ENCODE measurements at regions of chr1 and their contacts with region 1.

Region 1: GRCh38 chr1:107750358-107750959 is 214.5 kb downstream of the VAV3 start:
- DNase-seq: peak; percentile 74
- ATAC-seq: no peak
- H3K4me3 Mint-ChIP-seq: no peak overlapping the region
- H3K27ac Mint-ChIP-seq: no peak overlapping the region
- H3K4me1 Mint-ChIP-seq: no peaks in the 10 kb centered on the region
- H3K27me3 Mint-ChIP-seq: no peaks in the 10 kb centered on the region
- CTCF ChIP-seq: peak; percentile 72

Region 2: DNA sequence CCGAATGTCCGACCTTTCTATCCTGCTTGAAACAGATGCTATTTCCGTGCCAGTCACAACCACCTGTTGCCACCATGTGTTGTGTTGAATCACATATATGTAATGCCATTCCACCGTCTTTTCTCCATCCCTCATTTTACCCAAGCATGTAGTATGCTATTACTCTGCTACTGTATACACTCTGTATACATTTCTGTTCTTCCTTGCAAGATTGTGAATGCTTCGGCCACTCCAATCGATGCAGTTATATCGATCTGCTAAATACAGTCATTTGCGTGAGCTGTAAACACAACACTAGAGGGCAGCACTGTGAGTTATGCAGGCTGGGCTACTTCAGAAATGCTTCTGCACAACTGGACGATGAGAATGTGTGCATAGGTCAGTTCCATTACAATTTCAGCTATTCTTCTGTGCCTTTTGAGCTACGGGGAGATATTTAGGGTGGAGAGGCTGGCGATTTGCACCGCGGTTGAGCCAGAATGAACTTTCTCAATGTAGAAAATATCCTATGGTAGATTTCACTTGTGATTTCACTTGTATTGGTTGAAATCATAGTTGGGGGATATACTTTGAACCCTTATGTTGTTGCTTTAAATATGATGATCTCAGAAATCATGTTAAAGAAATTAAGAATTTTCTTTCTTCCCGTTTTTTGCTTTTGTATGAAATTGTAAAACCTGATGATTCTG is 319.8 kb before region 1 on chr1:
- CTCF ChIA-PET with region 1: interaction called, 12 read pairs
- POLR2A ChIA-PET with region 1: no interaction called
- intact Hi-C with region 1: no loop called
- DNase-seq: peak; percentile 49
- ATAC-seq: peak; percentile 49
- H3K4me3 Mint-ChIP-seq: no peak overlapping the region
- H3K27ac Mint-ChIP-seq: no peak overlapping the region
- H3K4me1 Mint-ChIP-seq: no peaks in the 10 kb centered on the region
- H3K27me3 Mint-ChIP-seq: peaks cover 1% of the 10 kb centered on the region
- CTCF ChIP-seq: peak; percentile 73

Region 3: DNA sequence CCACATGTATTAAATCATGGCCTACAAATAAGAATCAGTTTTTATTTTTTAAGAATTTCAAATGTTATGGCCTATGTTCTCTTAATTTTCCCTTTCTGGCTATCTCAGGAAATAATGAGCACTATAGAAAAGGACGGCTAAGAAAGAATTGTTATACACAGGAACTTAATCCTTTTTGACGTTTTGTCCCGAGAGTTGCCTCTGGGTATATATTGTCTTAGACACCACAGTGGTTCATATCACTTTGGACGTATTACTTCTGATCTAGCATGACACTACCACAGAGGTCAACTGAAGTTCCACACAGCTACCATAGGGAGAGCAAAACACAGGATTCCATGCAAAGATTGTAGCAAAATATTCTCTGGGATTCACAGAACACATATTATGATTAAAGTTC is 93.1 kb before region 1 on chr1:
- CTCF ChIA-PET with region 1: no interaction called
- POLR2A ChIA-PET with region 1: no interaction called
- intact Hi-C with region 1: no loop called
- DNase-seq: no peak
- ATAC-seq: no peak
- H3K4me3 Mint-ChIP-seq: no peak overlapping the region
- H3K27ac Mint-ChIP-seq: no peak overlapping the region
- H3K4me1 Mint-ChIP-seq: no peaks in the 10 kb centered on the region
- H3K27me3 Mint-ChIP-seq: no peaks in the 10 kb centered on the region
- CTCF ChIP-seq: no peak

Region 4: DNA sequence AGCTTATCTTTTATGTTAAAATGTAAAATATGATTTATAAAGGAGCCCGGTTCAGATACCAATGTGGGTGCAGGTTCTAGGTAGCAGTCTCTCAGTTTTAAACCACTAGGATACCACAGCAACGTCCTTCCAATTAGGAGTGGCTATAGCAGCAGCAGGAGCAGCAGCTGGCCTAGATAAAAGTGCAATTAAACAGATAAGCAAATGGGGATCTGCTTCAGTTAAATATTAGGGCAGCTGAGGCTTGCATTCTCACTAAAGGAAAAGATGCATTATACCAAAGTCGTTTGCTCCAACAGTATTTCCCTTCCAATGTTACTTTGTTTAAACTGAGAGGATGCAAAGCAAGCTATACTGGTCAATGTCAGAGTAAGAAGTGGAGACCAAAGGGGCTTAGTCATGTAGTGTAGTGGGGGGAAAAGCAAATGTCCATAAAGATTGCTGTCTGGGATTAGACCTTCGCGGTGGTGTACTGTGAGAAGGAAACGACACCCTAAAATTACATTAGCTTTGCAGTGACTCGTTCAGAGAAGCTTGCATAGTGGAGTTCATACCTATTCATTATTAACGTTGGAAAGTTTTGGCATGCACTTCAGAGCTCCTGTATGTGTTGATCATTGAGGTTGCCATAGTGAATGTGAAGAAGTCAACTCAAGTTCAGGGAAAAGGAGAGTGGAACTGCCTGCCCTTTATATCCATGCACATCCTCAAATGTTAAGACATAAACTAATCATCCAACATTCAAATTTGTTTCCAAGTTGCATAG is 57.7 kb before region 1 on chr1:
- CTCF ChIA-PET with region 1: no interaction called
- POLR2A ChIA-PET with region 1: no interaction called
- intact Hi-C with region 1: loop called (anchors 10 kb)
- DNase-seq: no peak
- ATAC-seq: no peak
- H3K4me3 Mint-ChIP-seq: no peak overlapping the region
- H3K27ac Mint-ChIP-seq: no peak overlapping the region
- H3K4me1 Mint-ChIP-seq: peaks cover 4% of the 10 kb centered on the region
- H3K27me3 Mint-ChIP-seq: no peaks in the 10 kb centered on the region
- CTCF ChIP-seq: no peak

Region 5: DNA sequence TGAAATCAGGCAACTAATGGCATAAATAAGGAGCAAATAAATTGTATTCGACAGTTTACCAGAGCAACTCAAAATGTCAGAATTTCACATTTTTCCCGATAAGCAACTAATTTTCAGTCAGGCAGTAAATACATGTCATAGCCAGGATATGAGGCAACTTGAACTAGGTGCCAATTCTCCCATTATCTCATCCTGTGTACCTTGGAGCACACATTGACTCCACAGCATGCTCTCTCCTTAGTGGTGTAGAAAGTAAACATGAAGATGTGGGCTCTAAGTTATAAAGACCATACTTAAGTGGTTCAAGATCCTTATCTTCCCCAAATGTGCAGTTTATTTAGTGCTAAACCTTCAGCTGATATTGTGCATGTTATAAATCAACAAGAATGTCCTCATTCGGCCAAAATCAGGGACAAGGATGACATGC is 16.7 kb after region 1 on chr1:
- CTCF ChIA-PET with region 1: interaction called, 10 read pairs
- POLR2A ChIA-PET with region 1: no interaction called
- intact Hi-C with region 1: no loop called
- DNase-seq: no peak
- ATAC-seq: no peak
- H3K4me3 Mint-ChIP-seq: no peak overlapping the region
- H3K27ac Mint-ChIP-seq: no peak overlapping the region
- H3K4me1 Mint-ChIP-seq: no peaks in the 10 kb centered on the region
- H3K27me3 Mint-ChIP-seq: no peaks in the 10 kb centered on the region
- CTCF ChIP-seq: no peak

Region 6: GRCh38 chr1:107851418-107851817 is 101.0 kb after region 1 on chr1:
- CTCF ChIA-PET with region 1: no interaction called
- POLR2A ChIA-PET with region 1: no interaction called
- intact Hi-C with region 1: no loop called
- DNase-seq: no peak
- ATAC-seq: no peak
- H3K4me3 Mint-ChIP-seq: no peak overlapping the region
- H3K27ac Mint-ChIP-seq: no peak overlapping the region
- H3K4me1 Mint-ChIP-seq: peaks cover 9% of the 10 kb centered on the region
- H3K27me3 Mint-ChIP-seq: no peaks in the 10 kb centered on the region
- CTCF ChIP-seq: no peak

Measured in activated CD8-positive, alpha-beta T cell treated with anti-CD3 and anti-CD28 coated beads for 36 hours (primary cell).